ENCODE measurements at regions of chr6 and their contacts with region 1.

Region 1: DNA sequence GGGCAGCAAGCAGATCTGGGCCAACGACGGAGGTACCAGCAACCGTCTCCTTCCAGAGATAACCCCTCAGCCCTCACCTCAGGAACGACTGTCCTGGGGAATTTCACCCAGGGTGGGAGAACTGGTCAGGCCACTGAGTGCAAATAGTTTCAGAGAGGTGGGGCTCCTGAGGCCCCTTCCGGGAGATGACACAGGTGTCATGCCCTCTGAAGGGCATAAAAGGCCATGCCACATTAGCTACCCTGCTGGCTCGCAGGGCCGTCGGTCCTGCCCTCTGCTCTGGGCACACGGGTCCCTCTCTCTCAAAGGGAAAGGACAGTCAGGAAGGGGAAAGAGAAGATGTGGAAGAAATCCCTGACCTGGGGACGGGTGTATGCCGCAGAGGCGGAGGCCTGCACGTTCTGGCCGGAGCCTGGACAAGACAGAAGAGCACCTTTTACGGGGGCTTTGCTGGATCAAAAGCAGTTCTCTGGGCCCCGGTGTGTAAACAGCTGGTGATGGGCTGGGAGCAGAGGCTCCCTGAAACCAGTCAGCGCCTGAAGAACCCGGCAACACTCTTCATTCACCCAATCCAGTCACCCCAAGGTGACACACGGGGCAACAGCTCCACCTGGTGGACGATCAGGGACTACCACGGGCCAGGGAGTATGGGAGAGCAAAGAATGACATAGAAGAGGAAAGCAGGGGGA is 6.4 kb upstream of the TAF8 start:
- DNase-seq: peak; percentile 80 to 90 (median 86)
- H3K4me3 ChIP-seq: no peak overlapping the region
- H3K27ac ChIP-seq: no peak overlapping the region
- H3K4me1 ChIP-seq: peaks cover 31 to 87% (median 79%) of the 10 kb centered on the region in 4 experiments
- H3K27me3 ChIP-seq: no peaks in the 10 kb centered on the region

Region 2: GRCh38 chr6:41801380-41801779 is 242.6 kb before region 1 on chr6:
- CTCF ChIA-PET with region 1: interaction called, 22 read pairs
- POLR2A ChIA-PET with region 1: no interaction called
- DNase-seq: peak in 2 of 3 donors; percentile 37 to 41
- H3K4me3 ChIP-seq: no peak overlapping the region
- H3K27ac ChIP-seq: no peak overlapping the region
- H3K4me1 ChIP-seq: no peaks in the 10 kb centered on the region
- H3K27me3 ChIP-seq: no peaks in the 10 kb centered on the region

Region 3: DNA sequence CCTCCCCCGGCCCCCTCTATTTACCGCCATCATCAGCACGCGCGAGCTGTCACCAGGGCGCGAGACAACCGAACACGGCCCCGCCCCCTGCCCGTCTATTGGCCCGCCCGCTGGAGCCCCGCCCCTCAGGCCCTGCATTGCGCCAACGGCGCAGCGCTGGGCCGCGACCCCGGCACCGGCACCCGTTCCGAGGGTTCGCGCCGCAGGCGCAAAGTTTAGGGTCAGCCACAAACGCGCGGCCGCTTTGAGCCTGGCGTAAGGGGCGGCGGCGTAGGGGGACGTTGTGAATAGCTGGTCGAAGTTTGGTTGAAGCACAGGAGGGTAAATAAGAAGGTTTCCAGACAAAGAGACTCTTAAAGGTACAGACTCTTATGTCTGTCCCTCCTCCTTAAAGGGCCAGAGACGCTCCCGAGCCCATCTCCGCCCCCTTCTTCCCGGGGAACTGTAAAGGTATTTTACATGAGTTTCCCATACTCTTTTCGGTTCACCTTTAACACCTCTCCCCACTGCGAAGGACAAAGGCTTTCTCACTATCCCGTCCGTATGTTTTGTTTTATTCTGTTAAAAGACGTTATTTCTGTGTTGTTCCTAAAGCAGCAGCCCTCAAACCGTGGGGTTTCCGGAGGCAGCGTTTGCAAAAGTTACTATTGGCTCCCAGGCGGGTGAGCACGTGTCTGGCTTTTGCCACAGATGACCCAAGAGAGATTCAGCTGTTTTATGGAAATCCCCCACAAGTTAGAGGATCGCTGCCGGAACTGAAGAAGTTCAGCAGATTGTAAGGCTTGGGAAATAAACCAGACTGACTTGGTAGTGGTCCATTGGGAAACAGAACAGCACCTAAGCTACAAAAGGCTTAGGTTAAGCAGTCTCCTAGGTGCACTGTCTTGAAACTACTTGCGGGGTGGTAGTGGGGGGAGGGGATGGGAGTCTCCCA is 148.4 kb before region 1 on chr6 and contains the start of gene USP49:
- CTCF ChIA-PET with region 1: interaction called, 19 read pairs
- POLR2A ChIA-PET with region 1: no interaction called
- DNase-seq: peak; percentile 88 to 96 (median 96)
- H3K4me3 ChIP-seq: peak within 1 kb of the TSS; percentile 54 to 94 (median 86)
- H3K27ac ChIP-seq: peak within 1 kb of the TSS; percentile 89 to 96
- H3K4me1 ChIP-seq: peaks cover 11 to 30% (median 25%) of the 10 kb centered on the region in 4 experiments
- H3K27me3 ChIP-seq: no peaks in the 10 kb centered on the region

Region 4: GRCh38 chr6:41920921-41921711 is 122.8 kb before region 1 on chr6 and contains the starts of genes BYSL and MED20:
- CTCF ChIA-PET with region 1: interaction called, 15 read pairs
- POLR2A ChIA-PET with region 1: no interaction called
- DNase-seq: peak; percentile 97 to 98 (median 98)
- H3K4me3 ChIP-seq: peak within 1 kb of the TSS; percentile 87 to 100 (median 99)
- H3K27ac ChIP-seq: peak within 1 kb of the TSS; percentile 96 to 97
- H3K4me1 ChIP-seq: peaks cover 20 to 38% (median 27%) of the 10 kb centered on the region in 4 experiments
- H3K27me3 ChIP-seq: no peaks in the 10 kb centered on the region

Region 5: GRCh38 chr6:42017021-42017643 is 26.8 kb before region 1 on chr6:
- CTCF ChIA-PET with region 1: interaction called, 11 read pairs
- POLR2A ChIA-PET with region 1: no interaction called
- DNase-seq: peak; percentile 86 to 96 (median 94)
- H3K4me3 ChIP-seq: peak overlapping the region in 4 of 7 experiments; percentile 1 to 49 (median 46)
- H3K27ac ChIP-seq: peak overlapping the region; percentile 7 to 66
- H3K4me1 ChIP-seq: peaks cover 14 to 55% (median 36%) of the 10 kb centered on the region in 4 experiments
- H3K27me3 ChIP-seq: no peaks in the 10 kb centered on the region

Region 6: GRCh38 chr6:42086046-42087035 is 42.4 kb after region 1 on chr6:
- CTCF ChIA-PET with region 1: no interaction called
- POLR2A ChIA-PET with region 1: no interaction called
- DNase-seq: no peak
- H3K4me3 ChIP-seq: no peak overlapping the region
- H3K27ac ChIP-seq: no peak overlapping the region
- H3K4me1 ChIP-seq: no peaks in the 10 kb centered on the region
- H3K27me3 ChIP-seq: no peaks in the 10 kb centered on the region

Region 7: DNA sequence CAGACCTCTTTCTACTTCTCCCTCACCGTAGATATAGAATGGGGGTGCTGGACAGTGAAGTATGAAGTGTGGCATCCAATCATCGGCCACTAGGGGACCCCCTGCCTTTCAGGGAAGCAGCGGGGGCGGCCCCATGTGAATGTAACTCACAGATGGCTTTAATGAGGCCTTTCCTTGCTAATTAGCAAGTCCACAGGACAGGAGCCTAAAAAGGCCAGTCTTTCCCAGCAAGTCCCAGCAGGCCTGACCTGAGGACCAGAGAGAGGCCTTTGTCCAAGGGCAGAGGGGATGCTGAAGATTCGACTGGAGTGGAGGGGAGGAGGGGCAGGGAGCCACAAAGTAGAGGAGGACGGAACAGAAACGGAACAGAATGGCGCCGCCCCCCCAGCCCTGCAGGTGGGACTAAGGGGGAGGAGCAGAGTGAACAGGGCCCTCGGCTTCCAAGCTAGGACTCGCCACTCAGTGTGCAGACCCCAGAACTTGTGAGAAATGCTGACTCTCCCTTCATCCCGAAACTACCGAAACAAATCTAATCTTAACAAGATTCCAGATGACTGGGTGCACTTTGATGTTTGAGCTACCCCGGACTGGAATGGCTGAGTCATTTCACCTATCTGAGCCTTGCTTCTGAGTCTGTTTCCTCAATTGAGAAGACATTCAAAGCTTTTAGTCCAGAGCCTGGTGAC is 92.7 kb after region 1 on chr6:
- CTCF ChIA-PET with region 1: no interaction called
- POLR2A ChIA-PET with region 1: no interaction called
- DNase-seq: peak; percentile 79 to 93 (median 91)
- H3K4me3 ChIP-seq: peak overlapping the region in 6 of 7 experiments; percentile 19 to 71 (median 36)
- H3K27ac ChIP-seq: peak overlapping the region in 1 of 2 experiments; percentile 62
- H3K4me1 ChIP-seq: peaks cover 0 to 27% (median 21%) of the 10 kb centered on the region in 4 experiments
- H3K27me3 ChIP-seq: peaks cover 0 to 6% (median 1%) of the 10 kb centered on the region in 5 experiments